ENCODE measurements at regions of chr17 and their contacts with region 1.

Region 1: DNA sequence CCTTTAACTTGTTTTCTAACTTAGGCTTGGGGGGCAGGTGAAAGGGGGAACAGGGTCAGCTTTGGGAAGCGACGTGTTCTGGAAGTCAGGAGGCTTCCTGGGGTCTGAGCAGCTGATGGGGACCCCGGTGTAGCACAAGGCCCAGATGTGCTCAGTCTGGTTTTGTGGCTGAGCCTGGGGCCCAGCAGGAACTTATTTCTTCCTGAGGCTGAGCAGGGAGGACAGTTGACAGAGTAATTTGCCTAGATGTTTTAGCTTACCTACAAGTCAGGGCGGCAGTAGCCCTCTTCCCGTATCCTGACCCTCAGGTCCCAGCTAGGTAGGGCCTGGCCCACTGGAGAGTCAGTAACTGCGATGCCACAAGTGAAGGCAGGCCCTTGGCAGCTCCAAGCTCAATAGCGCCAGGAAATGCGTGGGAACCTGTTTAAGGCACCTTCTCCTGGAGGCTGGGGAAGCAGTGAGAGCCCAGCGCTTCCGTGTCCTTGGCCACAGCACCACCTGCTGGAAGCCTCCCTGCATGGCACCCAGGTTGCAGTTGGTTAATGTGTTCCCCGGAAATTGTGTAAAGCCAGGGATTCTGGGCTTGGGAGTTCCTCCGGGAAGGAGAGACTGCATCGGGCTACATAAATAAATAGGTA is 5.2 kb downstream of the CCR7 start:
- DNase-seq: peak; percentile 85
- H3K4me3 Mint-ChIP-seq: peak overlapping the region; percentile 86
- H3K27ac Mint-ChIP-seq: peak overlapping the region; percentile 89
- H3K4me1 Mint-ChIP-seq: peaks cover 74% of the 10 kb centered on the region
- H3K27me3 Mint-ChIP-seq: no peaks in the 10 kb centered on the region

Region 2: DNA sequence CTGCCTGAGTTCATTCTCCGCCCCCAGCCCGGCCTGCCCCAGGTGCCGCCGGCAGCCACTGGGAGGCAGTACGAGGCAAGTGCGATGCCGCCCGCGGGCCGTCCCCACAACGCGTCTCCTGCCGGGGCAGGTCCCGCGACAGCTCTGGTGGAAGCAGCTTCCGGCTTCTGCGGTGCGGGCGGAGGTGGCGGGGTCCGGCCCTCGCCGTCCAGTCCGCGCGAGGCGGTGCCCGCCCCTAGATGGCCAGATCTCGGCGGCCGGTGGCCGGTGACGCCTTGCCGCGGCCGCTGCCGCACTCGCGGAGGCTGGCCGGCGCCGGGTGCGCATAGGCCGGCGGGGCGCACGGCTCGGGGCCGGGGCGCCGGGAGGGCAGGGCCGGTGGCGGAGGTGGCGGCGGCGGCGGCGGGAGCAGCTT is 197.4 kb before region 1 on chr17:
- CTCF ChIA-PET with region 1: interaction called, 24 read pairs
- POLR2A ChIA-PET with region 1: interaction called, 4 read pairs
- DNase-seq: peak; percentile 91
- H3K4me3 Mint-ChIP-seq: peak overlapping the region; percentile 77
- H3K27ac Mint-ChIP-seq: no peak overlapping the region
- H3K4me1 Mint-ChIP-seq: peaks cover 41% of the 10 kb centered on the region
- H3K27me3 Mint-ChIP-seq: peaks cover 12% of the 10 kb centered on the region

Region 3: GRCh38 chr17:40542558-40543411 is 17.3 kb before region 1 on chr17:
- CTCF ChIA-PET with region 1: interaction called, 317 read pairs
- POLR2A ChIA-PET with region 1: interaction called, 4 read pairs
- DNase-seq: no peak
- H3K4me3 Mint-ChIP-seq: no peak overlapping the region
- H3K27ac Mint-ChIP-seq: peak overlapping the region; percentile 82
- H3K4me1 Mint-ChIP-seq: peaks cover 83% of the 10 kb centered on the region
- H3K27me3 Mint-ChIP-seq: no peaks in the 10 kb centered on the region

Region 4: DNA sequence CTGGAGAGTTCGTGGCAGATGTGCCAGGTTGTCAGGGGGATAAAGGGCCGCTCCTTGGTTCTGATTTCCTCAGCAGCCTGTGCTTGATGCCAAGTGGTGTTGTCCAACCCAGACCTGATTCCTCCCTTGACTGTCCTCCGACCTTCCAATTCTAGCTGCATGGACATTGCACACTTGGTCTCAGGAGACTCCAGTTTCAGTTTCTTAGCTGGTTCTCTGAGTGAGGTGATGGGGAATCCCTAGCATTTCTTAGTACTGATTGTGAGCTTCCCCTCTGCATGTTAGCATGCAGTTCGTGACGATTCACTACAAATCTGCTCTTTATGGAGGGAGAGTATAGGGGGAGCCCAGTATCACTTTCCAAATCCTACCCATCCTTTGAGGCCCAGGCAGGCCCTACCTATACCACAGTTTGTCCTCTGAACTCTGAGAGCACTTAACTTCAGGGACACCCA is 17.6 kb after region 1 on chr17:
- CTCF ChIA-PET with region 1: interaction called, 33 read pairs
- POLR2A ChIA-PET with region 1: interaction called, 4 read pairs
- DNase-seq: peak; percentile 52
- H3K4me3 Mint-ChIP-seq: peak overlapping the region; percentile 29
- H3K27ac Mint-ChIP-seq: peak overlapping the region; percentile 76
- H3K4me1 Mint-ChIP-seq: peaks cover 71% of the 10 kb centered on the region
- H3K27me3 Mint-ChIP-seq: no peaks in the 10 kb centered on the region

Region 5: DNA sequence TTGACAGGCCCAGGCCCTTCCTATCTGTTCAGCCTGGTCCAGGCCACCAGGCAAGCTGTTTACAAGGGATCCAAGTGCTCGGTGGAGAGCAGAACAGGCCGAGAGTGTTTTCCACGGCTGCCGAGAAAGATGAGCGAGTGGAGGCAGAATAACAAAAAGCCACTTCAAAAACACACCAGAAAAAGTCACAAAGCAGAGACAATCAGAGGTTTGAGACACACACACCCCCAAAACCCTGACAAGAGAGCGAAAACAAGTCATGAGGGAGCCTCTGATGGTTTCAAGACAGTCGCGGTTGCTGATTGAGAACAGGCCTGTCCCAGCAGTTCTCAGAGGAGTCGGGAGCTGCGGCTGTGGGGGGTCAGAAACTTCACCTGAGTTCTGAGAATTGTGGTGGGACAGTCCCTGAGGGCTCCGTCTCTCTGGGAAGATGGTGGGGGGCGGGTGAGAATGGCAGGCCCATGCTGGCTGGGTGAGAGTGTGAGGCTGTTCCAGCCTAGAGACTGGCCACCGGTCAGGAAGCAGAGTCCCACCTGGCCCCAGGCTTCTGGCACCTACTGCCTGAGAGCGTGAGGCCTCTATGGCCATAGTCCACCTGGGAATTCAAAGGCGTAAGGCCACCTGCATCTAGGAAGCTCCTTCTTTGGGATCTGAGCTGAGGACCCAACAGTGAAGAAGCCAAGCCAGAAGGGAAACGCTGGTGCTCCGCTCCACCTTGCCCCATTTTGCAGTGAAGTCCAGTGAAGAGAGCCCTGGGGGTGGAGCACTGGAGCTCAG is 42.9 kb after region 1 on chr17:
- CTCF ChIA-PET with region 1: interaction called, 23 read pairs
- POLR2A ChIA-PET with region 1: interaction called, 10 read pairs
- DNase-seq: peak; percentile 82
- H3K4me3 Mint-ChIP-seq: peak overlapping the region; percentile 69
- H3K27ac Mint-ChIP-seq: peak overlapping the region; percentile 98
- H3K4me1 Mint-ChIP-seq: peaks cover 98% of the 10 kb centered on the region
- H3K27me3 Mint-ChIP-seq: no peaks in the 10 kb centered on the region

Region 6: GRCh38 chr17:40615295-40615988 is 55.4 kb after region 1 on chr17:
- CTCF ChIA-PET with region 1: interaction called, 18 read pairs
- POLR2A ChIA-PET with region 1: interaction called, 5 read pairs
- DNase-seq: peak; percentile 53
- H3K4me3 Mint-ChIP-seq: peak overlapping the region; percentile 33
- H3K27ac Mint-ChIP-seq: peak overlapping the region; percentile 88
- H3K4me1 Mint-ChIP-seq: peaks cover 90% of the 10 kb centered on the region
- H3K27me3 Mint-ChIP-seq: no peaks in the 10 kb centered on the region